PC-3 (cell line): ENCODE measurements at regions of chr10 and their contacts with region 1.

Region 1: DNA sequence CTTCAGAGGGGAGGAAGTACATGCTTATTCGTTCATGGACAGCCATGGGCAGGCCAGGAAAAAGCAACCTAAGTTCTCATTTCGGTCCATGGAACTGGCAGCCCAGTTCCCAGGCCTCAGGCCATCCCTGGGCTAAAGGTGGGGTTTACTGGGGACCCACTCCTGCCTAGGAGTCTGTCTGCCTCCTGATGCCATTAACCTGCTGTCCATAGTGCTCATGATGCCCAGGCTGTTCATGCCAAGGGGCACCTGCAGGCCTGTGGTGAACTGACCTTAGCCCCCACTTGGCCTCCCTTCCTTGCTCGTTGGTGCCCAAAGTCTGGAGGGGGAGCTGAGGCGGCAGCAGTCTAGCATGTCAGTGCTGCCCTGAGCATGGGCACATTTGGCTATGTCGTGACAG is 450.2 kb upstream of the MBL2 start:
- DNase-seq: no peak
- ATAC-seq: no peak
- H3K4me3 ChIP-seq: no peak overlapping the region
- H3K27ac ChIP-seq: no peak overlapping the region
- H3K4me1 ChIP-seq: no peaks in the 10 kb centered on the region
- H3K27me3 ChIP-seq: no peaks in the 10 kb centered on the region
- CTCF ChIP-seq: no peak

Region 2: GRCh38 chr10:52443419-52444388 is 779.1 kb before region 1 on chr10:
- CTCF ChIA-PET with region 1: no interaction called
- POLR2A ChIA-PET with region 1: no interaction called
- intact Hi-C with region 1: no loop called
- DNase-seq: peak; percentile 100
- ATAC-seq: peak; percentile 80
- H3K4me3 ChIP-seq: peak overlapping the region; percentile 36
- H3K27ac ChIP-seq: peak overlapping the region; percentile 82
- H3K4me1 ChIP-seq: peaks cover 62% of the 10 kb centered on the region
- H3K27me3 ChIP-seq: no peaks in the 10 kb centered on the region
- CTCF ChIP-seq: no peak

Region 3: GRCh38 chr10:53284615-53285177 is 61.9 kb after region 1 on chr10:
- CTCF ChIA-PET with region 1: no interaction called
- POLR2A ChIA-PET with region 1: interaction called, 12 read pairs
- intact Hi-C with region 1: no loop called
- DNase-seq: peak; percentile 78
- ATAC-seq: peak; percentile 90
- H3K4me3 ChIP-seq: no peak overlapping the region
- H3K27ac ChIP-seq: no peak overlapping the region
- H3K4me1 ChIP-seq: peaks cover 8% of the 10 kb centered on the region
- H3K27me3 ChIP-seq: no peaks in the 10 kb centered on the region
- CTCF ChIP-seq: no peak